Activated naive CD4-positive, alpha-beta T cell treated with anti-CD3 and anti-CD28 coated beads for 36 hours (primary cell): ENCODE measurements at regions of chr2 and their contacts with region 1.

Region 1: GRCh38 chr2:62705007-62705829 is at the start of gene EHBP1:
- DNase-seq: peak; percentile 98
- H3K4me3 Mint-ChIP-seq: peak within 1 kb of the TSS; percentile 90
- H3K27ac Mint-ChIP-seq: peak within 1 kb of the TSS; percentile 76
- H3K4me1 Mint-ChIP-seq: peaks cover 27% of the 10 kb centered on the region
- H3K27me3 Mint-ChIP-seq: no peaks in the 10 kb centered on the region
- total RNA-seq, gene EHBP1: 17.4 to 17.5 TPM

Region 2: GRCh38 chr2:61854474-61855182 is 850.6 kb before region 1 on chr2:
- CTCF ChIA-PET with region 1: no interaction called
- intact Hi-C with region 1: loop called (anchors 10 kb)
- DNase-seq: peak; percentile 95
- H3K4me3 Mint-ChIP-seq: peak overlapping the region; percentile 93
- H3K27ac Mint-ChIP-seq: peak overlapping the region; percentile 91
- H3K4me1 Mint-ChIP-seq: peaks cover 17% of the 10 kb centered on the region
- H3K27me3 Mint-ChIP-seq: no peaks in the 10 kb centered on the region

Region 3: DNA sequence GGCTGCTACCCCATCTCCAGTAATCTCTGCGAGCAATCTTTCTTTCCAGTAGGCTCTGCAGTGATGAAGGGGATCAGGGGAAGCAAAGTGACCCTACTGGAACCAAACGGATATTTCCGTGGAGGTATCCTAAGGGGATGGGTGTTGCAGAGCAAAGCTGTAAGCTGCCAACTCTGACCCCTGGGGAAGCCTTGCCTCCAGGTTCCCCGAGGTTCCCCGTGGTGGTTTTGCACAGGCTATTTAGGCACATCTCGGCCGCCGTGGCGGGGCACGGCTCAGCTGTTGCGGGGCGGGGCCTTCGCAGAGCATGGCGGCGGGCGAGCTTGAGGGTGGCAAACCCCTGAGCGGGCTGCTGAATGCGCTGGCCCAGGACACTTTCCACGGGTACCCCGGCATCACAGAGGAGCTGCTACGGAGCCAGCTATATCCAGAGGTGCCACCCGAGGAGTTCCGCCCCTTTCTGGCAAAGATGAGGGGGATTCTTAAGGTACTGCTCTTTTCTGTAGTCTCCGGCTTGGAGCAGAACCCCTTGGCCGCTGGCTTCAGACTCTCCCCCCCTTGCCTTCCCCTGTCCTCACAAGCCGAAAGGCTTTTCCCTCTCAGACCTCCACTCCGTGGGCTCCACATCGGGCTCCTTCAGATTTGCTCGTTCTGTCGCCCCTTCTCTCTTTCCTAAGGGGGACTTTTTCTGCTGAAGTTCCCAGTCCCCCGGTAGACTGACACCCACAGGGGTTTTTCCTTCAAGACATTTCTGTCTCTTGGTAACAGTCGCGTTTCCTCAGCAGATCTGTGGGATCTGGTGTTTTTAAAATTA is 799.6 kb before region 1 on chr2 and contains the start of gene COMMD1:
- CTCF ChIA-PET with region 1: no interaction called
- intact Hi-C with region 1: loop called (anchors 5 kb)
- DNase-seq: peak; percentile 92
- H3K4me3 Mint-ChIP-seq: peak within 1 kb of the TSS; percentile 96
- H3K27ac Mint-ChIP-seq: peak within 1 kb of the TSS; percentile 63
- H3K4me1 Mint-ChIP-seq: peaks cover 25% of the 10 kb centered on the region
- H3K27me3 Mint-ChIP-seq: no peaks in the 10 kb centered on the region
- total RNA-seq, gene COMMD1: 26.9 to 29.5 TPM

Region 4: GRCh38 chr2:62195421-62196277 is 509.6 kb before region 1 on chr2 and contains the start of gene B3GNT2:
- CTCF ChIA-PET with region 1: no interaction called
- intact Hi-C with region 1: loop called (anchors 1 kb)
- DNase-seq: peak; percentile 85
- H3K4me3 Mint-ChIP-seq: peak within 1 kb of the TSS; percentile 88
- H3K27ac Mint-ChIP-seq: peak within 1 kb of the TSS; percentile 91
- H3K4me1 Mint-ChIP-seq: peaks cover 22% of the 10 kb centered on the region
- H3K27me3 Mint-ChIP-seq: peaks cover 2% of the 10 kb centered on the region
- total RNA-seq, gene B3GNT2: 31.2 to 33.0 TPM

Region 5: GRCh38 chr2:62306751-62307468 is 398.3 kb before region 1 on chr2:
- CTCF ChIA-PET with region 1: no interaction called
- intact Hi-C with region 1: loop called (anchors 1 kb)
- DNase-seq: peak; percentile 73
- H3K4me3 Mint-ChIP-seq: no peak overlapping the region
- H3K27ac Mint-ChIP-seq: peak overlapping the region; percentile 90
- H3K4me1 Mint-ChIP-seq: peaks cover 74% of the 10 kb centered on the region
- H3K27me3 Mint-ChIP-seq: no peaks in the 10 kb centered on the region

Region 6: GRCh38 chr2:62774555-62775366 is 69.5 kb after region 1 on chr2:
- CTCF ChIA-PET with region 1: interaction called, 4 read pairs
- intact Hi-C with region 1: loop called (anchors 1 kb)
- DNase-seq: no peak
- H3K4me3 Mint-ChIP-seq: no peak overlapping the region
- H3K27ac Mint-ChIP-seq: no peak overlapping the region
- H3K4me1 Mint-ChIP-seq: peaks cover 1% of the 10 kb centered on the region
- H3K27me3 Mint-ChIP-seq: no peaks in the 10 kb centered on the region

Region 7: GRCh38 chr2:63856303-63856603 is 1151.0 kb after region 1 on chr2:
- CTCF ChIA-PET with region 1: no interaction called
- intact Hi-C with region 1: loop called (anchors 5 kb)
- DNase-seq: peak; percentile 67
- H3K4me3 Mint-ChIP-seq: peak overlapping the region; percentile 22
- H3K27ac Mint-ChIP-seq: peak overlapping the region; percentile 80
- H3K4me1 Mint-ChIP-seq: peaks cover 50% of the 10 kb centered on the region
- H3K27me3 Mint-ChIP-seq: no peaks in the 10 kb centered on the region